Endothelial cell of umbilical vein (primary cell): ENCODE measurements at regions of chr10 and their contacts with region 1.

Region 1: GRCh38 chr10:128011175-128011979 is 104.5 kb downstream of the PTPRE start:
- DNase-seq: peak; percentile 81
- H3K4me3 ChIP-seq: no peak overlapping the region
- H3K27ac ChIP-seq: no peak overlapping the region
- H3K4me1 ChIP-seq: peaks cover 39% of the 10 kb centered on the region
- H3K27me3 ChIP-seq: no peaks in the 10 kb centered on the region
- CTCF ChIP-seq: peak; percentile 98
- POLR2A ChIP-seq: peak; percentile 43

Region 2: DNA sequence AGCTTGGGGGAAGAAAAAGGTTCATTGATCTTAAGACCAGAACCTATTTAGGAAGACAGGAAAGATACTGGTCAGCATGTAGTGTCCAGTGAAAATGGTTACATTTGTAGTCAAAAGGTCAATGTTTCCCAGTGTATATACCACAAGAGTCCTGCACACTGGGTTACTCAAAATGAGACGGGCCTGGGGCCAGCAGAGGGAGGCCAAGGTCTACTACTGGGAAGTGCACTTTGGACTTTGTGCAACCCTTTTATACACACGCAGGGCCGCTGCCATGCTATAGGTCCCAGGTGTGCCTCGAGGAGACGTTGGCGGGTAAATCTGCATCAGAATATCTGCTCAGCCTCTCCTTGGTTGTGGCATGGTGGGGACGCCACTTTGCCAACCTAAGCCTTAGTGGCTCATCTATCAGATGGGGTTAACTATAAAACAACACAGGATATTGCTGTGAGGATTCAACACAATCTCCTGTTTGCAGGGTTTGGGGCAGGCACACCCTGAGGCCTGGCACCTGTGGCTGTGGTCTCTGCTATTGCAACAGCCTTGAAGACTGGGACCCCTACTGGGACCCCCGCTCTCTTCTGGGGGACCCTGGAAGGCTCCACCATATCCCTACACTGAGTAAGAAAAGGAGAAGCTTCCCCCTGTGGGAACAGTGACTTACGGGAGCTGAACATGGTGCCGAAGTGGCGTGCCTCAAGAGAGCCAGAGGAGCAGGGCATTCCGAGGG is 138.3 kb before region 1 on chr10:
- CTCF ChIA-PET with region 1: interaction called, 17 read pairs
- POLR2A ChIA-PET with region 1: no interaction called
- dilution Hi-C with region 1: no loop called
- intact Hi-C with region 1: loop called (anchors 1 kb)
- DNase-seq: peak; percentile 25
- H3K4me3 ChIP-seq: no peak overlapping the region
- H3K27ac ChIP-seq: no peak overlapping the region
- H3K4me1 ChIP-seq: peaks cover 5% of the 10 kb centered on the region
- H3K27me3 ChIP-seq: peaks cover 4 to 19% of the 10 kb centered on the region in 2 experiments
- CTCF ChIP-seq: peak; percentile 20 to 34
- POLR2A ChIP-seq: no peak

Region 3: DNA sequence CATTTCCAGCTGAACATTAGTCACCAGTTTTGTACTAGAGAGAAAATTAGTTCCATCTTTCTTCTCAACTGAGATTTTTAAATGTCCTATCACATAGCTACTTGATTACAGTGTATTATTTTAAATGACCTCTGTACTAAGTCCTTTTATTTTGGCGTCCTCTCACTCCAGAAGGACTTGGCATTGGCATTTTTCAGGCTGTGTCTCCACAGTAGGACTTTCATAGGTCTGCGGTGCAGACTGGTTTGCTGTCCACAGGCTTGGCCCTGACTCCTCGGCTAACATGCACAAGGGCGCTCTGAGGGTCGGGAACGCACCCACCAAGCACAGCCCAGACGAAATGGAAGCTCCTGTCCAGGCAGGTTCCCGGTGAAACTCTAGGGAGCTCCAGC is 98.0 kb before region 1 on chr10:
- CTCF ChIA-PET with region 1: interaction called, 425 read pairs
- POLR2A ChIA-PET with region 1: interaction called, 4 read pairs
- dilution Hi-C with region 1: no loop called
- intact Hi-C with region 1: no loop called
- DNase-seq: no peak
- H3K4me3 ChIP-seq: no peak overlapping the region
- H3K27ac ChIP-seq: no peak overlapping the region
- H3K4me1 ChIP-seq: peaks cover 15% of the 10 kb centered on the region
- H3K27me3 ChIP-seq: no peaks in the 10 kb centered on the region
- CTCF ChIP-seq: no peak
- POLR2A ChIP-seq: no peak

Region 4: GRCh38 chr10:127977357-127978009 is 33.9 kb before region 1 on chr10:
- CTCF ChIA-PET with region 1: interaction called, 43 read pairs
- POLR2A ChIA-PET with region 1: no interaction called
- dilution Hi-C with region 1: no loop called
- intact Hi-C with region 1: loop called (anchors 1 kb)
- DNase-seq: peak; percentile 96
- H3K4me3 ChIP-seq: peak overlapping the region in 1 of 3 experiments; percentile 20
- H3K27ac ChIP-seq: peak overlapping the region; percentile 79
- H3K4me1 ChIP-seq: peaks cover 42% of the 10 kb centered on the region
- H3K27me3 ChIP-seq: no peaks in the 10 kb centered on the region
- CTCF ChIP-seq: no peak
- POLR2A ChIP-seq: peak; percentile 54

Region 5: DNA sequence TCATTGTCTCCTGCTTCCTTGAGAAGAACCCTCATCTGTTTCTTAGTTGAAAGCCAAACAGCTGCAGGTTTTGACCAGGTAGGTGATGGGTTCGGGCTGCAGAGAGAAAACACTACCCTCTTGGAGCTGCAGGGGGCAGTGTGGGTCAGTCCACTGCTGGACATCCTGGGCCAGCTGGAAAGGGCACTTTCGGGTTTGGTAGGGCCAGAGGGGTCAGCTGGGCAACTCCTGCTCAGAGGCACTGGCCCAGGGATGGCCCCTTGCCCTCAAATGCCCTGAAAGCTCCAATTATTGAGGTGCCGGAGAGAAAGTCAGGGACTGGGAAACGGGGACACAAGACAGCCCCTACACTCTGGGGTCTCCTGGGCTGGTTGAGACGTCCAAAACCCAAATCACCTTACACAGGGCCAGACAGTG is 24.2 kb after region 1 on chr10:
- CTCF ChIA-PET with region 1: interaction called, 25 read pairs
- POLR2A ChIA-PET with region 1: no interaction called
- dilution Hi-C with region 1: no loop called
- intact Hi-C with region 1: no loop called
- DNase-seq: peak; percentile 30
- H3K4me3 ChIP-seq: no peak overlapping the region
- H3K27ac ChIP-seq: no peak overlapping the region
- H3K4me1 ChIP-seq: peaks cover 22% of the 10 kb centered on the region
- H3K27me3 ChIP-seq: no peaks in the 10 kb centered on the region
- CTCF ChIP-seq: peak; percentile 76 to 83
- POLR2A ChIP-seq: no peak

Region 6: DNA sequence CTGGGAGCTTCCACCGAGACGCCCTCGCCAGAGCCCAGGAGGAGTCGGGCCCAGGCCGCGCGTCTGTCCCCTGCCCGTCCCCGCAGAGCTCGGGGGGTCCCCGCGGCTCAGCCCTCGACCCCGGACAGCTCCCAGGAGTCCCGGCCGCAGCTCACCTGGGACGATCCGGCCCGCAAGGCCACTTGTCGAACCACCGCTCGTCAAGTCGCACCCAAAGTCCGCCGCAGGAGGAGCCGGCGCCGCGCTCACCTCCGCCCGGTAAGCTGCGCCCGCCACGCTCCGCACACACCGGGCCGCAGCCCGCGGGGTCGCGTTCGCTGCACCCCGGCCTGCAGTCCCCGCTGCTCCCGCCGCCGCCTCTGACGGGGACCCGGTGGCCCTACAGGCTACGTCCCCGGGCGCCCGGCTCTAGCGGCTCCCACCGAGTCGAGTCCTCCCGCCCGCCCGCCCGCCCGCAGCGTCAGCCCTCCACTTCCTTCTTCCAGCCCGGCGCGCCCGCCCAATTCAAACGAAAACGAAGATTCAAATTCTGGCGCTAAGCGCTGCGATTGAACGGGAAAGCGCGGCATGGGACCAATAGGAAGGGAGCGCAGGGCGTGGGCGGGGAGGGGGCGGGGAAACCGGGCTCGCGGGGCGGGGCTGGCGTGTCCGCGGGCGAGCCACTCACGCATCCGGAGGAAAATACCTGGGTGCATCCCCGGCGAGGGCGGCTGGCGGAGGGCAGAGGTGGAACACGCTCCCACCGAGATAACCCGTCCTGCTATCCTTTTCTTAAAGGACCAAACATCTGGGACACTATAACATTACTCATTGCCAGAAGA is 114.8 kb after region 1 on chr10 and contains the start of gene MKI67:
- CTCF ChIA-PET with region 1: no interaction called
- POLR2A ChIA-PET with region 1: no interaction called
- dilution Hi-C with region 1: no loop called
- intact Hi-C with region 1: loop called (anchors 5 kb)
- DNase-seq: peak; percentile 90
- H3K4me3 ChIP-seq: peak within 1 kb of the TSS; percentile 84 to 96 (median 89)
- H3K27ac ChIP-seq: peak within 1 kb of the TSS; percentile 57
- H3K4me1 ChIP-seq: peaks cover 34% of the 10 kb centered on the region
- H3K27me3 ChIP-seq: no peaks in the 10 kb centered on the region
- CTCF ChIP-seq: no peak
- POLR2A ChIP-seq: no peak
- total RNA-seq, gene MKI67: 101 and 125 TPM in 2 replicates